ENCODE measurements at regions of chr6 and their contacts with region 1.

Region 1: GRCh38 chr6:110776413-110776812 is 38.9 kb downstream of the CDK19 start:
- DNase-seq: no peak
- ATAC-seq: peak; percentile 83

Region 2: GRCh38 chr6:110746680-110747079 is 29.7 kb before region 1 on chr6:
- intact Hi-C with region 1: loop called (anchors 1 kb)
- DNase-seq: no peak
- ATAC-seq: no peak

Measured in sciatic nerve (tissue), 2 donors.